AG04449 (cell line): ENCODE measurements at regions of chr16 and their contacts with region 1.

Region 1: GRCh38 chr16:8878521-8878911 is 3.6 kb upstream of the LITAFD start:
- DNase-seq: peak; percentile 51
- H3K4me3 ChIP-seq: no peak overlapping the region
- CTCF ChIP-seq: no peak

Region 2: GRCh38 chr16:8572919-8573724 is 305.4 kb before region 1 on chr16:
- CTCF ChIA-PET with region 1: interaction called, 36 read pairs
- POLR2A ChIA-PET with region 1: no interaction called
- DNase-seq: no peak
- H3K4me3 ChIP-seq: no peak overlapping the region; the same call in 1 of the 2 replicates
- CTCF ChIP-seq: peak; percentile 19

Region 3: GRCh38 chr16:8660841-8661301 is 217.6 kb before region 1 on chr16:
- CTCF ChIA-PET with region 1: interaction called, 132 read pairs
- POLR2A ChIA-PET with region 1: no interaction called
- DNase-seq: peak; percentile 9
- H3K4me3 ChIP-seq: peak overlapping the region; percentile 20; the same call in 1 of the 2 replicates
- CTCF ChIP-seq: peak; percentile 88

Region 4: DNA sequence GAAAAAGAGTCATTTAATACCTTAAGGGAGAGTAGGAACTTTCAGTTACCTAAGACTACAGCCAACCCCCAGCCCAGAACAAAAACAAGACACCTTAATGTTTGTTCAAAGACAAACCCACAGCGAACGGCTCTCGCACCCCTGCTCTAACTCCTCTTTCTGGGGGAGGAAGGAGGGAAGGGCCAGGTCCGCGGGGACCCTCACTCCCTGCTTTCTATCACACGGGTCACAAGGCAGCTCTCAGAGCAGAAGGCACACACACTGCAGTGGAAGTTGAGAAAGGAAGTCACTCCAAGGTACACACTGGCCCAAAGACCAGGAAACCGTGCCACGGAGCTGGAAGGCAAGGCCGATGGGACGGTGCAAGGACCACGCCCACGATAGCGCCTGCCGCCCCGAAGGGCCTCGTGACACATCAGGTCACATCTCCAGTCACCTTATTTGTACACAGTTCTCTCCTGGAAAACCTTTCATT is 13.6 kb after region 1 on chr16:
- CTCF ChIA-PET with region 1: interaction called, 39 read pairs
- POLR2A ChIA-PET with region 1: no interaction called
- DNase-seq: no peak
- H3K4me3 ChIP-seq: no peak overlapping the region
- CTCF ChIP-seq: no peak

Region 5: DNA sequence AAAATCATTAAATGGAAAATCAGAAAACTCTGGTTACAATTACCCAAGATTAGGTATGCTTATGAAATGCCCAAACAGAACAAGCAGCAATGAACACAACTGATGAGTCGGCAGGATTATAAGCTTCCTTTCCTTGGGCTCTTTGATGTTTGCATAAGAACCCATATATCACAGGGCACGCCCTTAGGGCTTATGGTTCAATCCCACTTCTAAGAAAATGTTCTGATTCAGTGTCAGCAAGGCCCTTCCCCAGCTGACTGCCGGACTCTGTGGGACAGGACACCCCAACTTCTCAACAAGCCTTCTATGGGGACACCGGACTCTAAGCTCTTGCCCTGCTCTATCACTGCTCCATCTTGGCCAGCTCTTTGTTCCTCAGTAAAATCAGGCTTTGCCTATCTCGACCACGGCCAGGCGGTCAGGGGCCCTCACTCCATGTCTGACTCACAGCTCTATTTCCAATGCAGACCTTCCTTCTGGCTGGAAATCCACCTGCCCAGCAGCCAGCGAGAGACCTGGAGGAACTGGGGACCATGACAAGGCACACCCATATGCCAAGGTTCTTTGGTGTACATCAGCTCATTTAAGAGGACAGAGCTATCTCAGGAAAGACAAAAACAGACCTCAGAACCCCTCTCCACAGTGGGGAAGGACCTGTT is 30.4 kb after region 1 on chr16:
- CTCF ChIA-PET with region 1: interaction called, 15 read pairs
- POLR2A ChIA-PET with region 1: no interaction called
- DNase-seq: no peak
- H3K4me3 ChIP-seq: no peak overlapping the region
- CTCF ChIP-seq: no peak